ENCODE measurements at regions of chr19 and their contacts with region 1.

Region 1: DNA sequence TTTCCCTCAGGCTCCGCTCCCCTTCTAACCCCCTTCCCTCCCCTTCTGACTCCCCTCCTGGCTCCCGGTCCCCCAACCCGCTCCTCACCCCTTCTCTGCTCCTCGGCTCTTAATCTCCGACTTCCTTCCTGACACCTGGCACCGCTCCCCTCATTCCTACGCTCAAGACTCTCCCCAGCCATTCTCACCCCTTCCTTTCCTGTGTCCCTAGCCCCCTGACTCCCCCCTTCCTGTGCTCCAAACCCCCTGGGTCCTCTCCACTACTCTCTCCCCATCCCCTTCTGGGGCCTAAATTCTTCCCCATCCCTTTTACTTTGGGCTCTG is 658 bp downstream of the CLPP start:
- DNase-seq: no peak
- ATAC-seq: no peak; the same call in 1 of the 3 replicates
- H3K4me3 ChIP-seq: peak overlapping the region; percentile 84
- H3K27ac ChIP-seq: peak overlapping the region; percentile 81
- H3K4me1 ChIP-seq: peaks cover 8 to 36% of the 10 kb centered on the region in 2 experiments; a peak in 4 of 5 replicates
- H3K27me3 ChIP-seq: no peaks in the 10 kb centered on the region
- CTCF ChIP-seq: no peak
- EP300 ChIP-seq: no peak
- POLR2A ChIP-seq: no peak
- RAD21 ChIP-seq: no peak

Region 2: DNA sequence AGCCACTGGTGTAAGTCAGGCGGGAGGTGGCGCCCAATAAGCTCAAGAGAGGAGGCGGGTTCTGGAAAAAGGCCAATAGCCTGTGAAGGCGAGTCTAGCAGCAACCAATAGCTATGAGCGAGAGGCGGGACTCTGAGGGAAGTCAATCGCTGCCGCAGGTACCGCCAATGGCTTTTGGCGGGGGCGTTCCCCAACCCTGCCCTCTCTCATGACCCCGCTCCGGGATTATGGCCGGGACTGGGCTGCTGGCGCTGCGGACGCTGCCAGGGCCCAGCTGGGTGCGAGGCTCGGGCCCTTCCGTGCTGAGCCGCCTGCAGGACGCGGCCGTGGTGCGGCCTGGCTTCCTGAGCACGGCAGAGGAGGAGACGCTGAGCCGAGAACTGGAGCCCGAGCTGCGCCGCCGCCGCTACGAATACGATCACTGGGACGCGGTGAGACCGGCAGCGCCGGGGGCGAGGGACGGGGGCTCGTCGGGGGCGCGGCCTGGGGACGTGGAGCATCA is 10.7 kb after region 1 on chr19 and contains the start of gene ALKBH7:
- CTCF ChIA-PET with region 1: no interaction called
- POLR2A ChIA-PET with region 1: interaction called, 29 read pairs
- in situ Hi-C with region 1: no loop called
- intact Hi-C with region 1: no loop called
- DNase-seq: peak; percentile 89 to 100 (median 92)
- ATAC-seq: peak; percentile 88
- H3K4me3 ChIP-seq: peak within 1 kb of the TSS; percentile 99
- H3K27ac ChIP-seq: peak within 1 kb of the TSS; percentile 97
- H3K4me1 ChIP-seq: peaks cover 8 to 62% of the 10 kb centered on the region in 2 experiments
- H3K27me3 ChIP-seq: no peaks in the 10 kb centered on the region
- CTCF ChIP-seq: no peak
- EP300 ChIP-seq: no peak
- POLR2A ChIP-seq: peak; percentile 84
- RAD21 ChIP-seq: peak in 1 of 2 experiments; percentile 7; a peak in 1 of 4 replicates
- polyA plus RNA-seq, gene ALKBH7: 0.69 to 2.8 TPM